Endothelial cell of umbilical vein (primary cell): ENCODE measurements at regions of chr19 and their contacts with region 1.

Region 1: GRCh38 chr19:46614114-46614722 is 10.7 kb downstream of the PTGIR start:
- DNase-seq: peak; percentile 73
- H3K4me3 ChIP-seq: no peak overlapping the region
- H3K27ac ChIP-seq: no peak overlapping the region
- H3K4me1 ChIP-seq: peaks cover 4% of the 10 kb centered on the region
- H3K27me3 ChIP-seq: no peaks in the 10 kb centered on the region
- CTCF ChIP-seq: peak; percentile 75 to 83
- POLR2A ChIP-seq: no peak

Region 2: DNA sequence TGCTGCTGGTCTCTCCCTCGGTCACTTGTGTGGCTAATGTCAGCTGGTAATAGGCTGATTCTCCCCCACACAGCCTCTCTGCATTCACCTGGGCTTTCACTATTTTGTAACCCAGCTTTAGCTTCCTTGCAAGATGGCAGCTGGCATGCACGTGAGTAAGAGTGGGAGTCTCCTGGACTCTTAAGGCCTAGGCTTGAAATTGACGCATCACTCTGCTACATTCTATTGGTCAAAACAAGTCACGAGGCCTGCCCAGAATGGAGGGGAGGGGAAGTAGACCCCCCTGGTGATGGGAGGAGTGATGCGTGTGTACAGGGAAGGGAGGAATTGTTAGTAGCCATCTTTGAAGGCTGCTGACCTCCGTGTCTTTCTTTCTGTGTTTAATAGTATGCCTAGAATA is 93.6 kb before region 1 on chr19:
- CTCF ChIA-PET with region 1: no interaction called
- POLR2A ChIA-PET with region 1: no interaction called
- dilution Hi-C with region 1: no loop called
- intact Hi-C with region 1: no loop called
- DNase-seq: no peak
- H3K4me3 ChIP-seq: no peak overlapping the region
- H3K27ac ChIP-seq: no peak overlapping the region
- H3K4me1 ChIP-seq: no peaks in the 10 kb centered on the region
- H3K27me3 ChIP-seq: no peaks in the 10 kb centered on the region
- CTCF ChIP-seq: no peak
- POLR2A ChIP-seq: no peak

Region 3: DNA sequence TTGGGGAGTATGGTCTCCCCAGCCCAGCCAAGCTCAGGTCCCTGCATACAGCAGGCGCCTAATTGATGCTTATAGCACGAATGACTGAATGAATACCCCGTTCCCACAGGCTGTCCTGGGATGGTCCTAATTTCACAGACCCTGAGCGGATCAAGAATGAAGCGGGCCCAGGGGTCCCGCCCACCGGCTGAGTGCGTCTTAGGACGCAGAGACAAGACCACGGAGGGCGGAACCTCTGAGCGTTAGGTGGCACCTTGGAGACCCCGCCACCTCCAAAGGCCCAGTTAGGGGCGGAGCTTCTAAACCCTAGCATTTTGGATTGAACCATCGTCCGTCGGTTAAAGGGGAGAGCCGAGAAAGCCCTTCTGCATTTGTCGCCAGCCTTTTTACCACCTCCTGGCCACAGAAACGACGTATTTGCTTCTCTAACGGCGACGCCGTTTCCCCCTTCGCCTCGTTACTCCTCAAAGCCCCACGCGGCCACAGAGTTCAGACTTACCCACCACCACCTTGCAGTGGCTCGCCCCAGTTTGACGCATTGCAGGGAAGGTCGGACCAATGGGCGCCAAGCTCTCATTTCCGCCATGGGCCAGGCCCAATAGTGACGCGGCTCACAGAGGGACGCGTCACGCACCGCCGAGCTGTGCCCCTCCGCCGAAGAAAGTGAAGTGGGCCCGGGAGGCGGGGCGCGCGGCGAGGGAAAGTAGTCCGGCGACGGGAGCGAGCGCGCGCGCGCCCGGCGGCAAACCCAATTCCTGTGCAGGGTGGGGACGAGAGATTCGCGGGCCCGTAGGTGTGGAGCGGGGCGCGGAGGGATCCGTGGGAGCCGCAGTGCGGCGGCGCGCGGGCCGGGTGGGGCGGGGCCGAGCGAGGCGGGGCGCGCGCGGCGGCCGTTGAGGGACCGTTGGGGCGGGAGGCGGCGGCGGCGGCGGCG is 13.6 kb before region 1 on chr19:
- CTCF ChIA-PET with region 1: interaction called, 17 read pairs
- POLR2A ChIA-PET with region 1: interaction called, 4 read pairs
- dilution Hi-C with region 1: no loop called
- intact Hi-C with region 1: loop called (anchors 1 kb)
- DNase-seq: peak; percentile 98
- H3K4me3 ChIP-seq: peak overlapping the region; percentile 2 to 99 (median 98)
- H3K27ac ChIP-seq: peak overlapping the region; percentile 93
- H3K4me1 ChIP-seq: peaks cover 13% of the 10 kb centered on the region
- H3K27me3 ChIP-seq: peaks cover 0 to 3% of the 10 kb centered on the region in 2 experiments
- CTCF ChIP-seq: no peak
- POLR2A ChIP-seq: peak; percentile 66

Region 4: GRCh38 chr19:46624958-46625661 is 10.9 kb after region 1 on chr19 and contains the start of gene PTGIR:
- CTCF ChIA-PET with region 1: interaction called, 29 read pairs
- POLR2A ChIA-PET with region 1: no interaction called
- dilution Hi-C with region 1: no loop called
- intact Hi-C with region 1: no loop called
- DNase-seq: peak; percentile 42
- H3K4me3 ChIP-seq: no peak within 1 kb of the TSS
- H3K27ac ChIP-seq: no peak within 1 kb of the TSS
- H3K4me1 ChIP-seq: peaks cover 12% of the 10 kb centered on the region
- H3K27me3 ChIP-seq: no peaks in the 10 kb centered on the region
- CTCF ChIP-seq: no peak
- POLR2A ChIP-seq: no peak
- total RNA-seq, gene PTGIR: 0.55 and 1.1 TPM in 2 replicates

Region 5: GRCh38 chr19:46634045-46634655 is 19.9 kb after region 1 on chr19:
- CTCF ChIA-PET with region 1: interaction called, 29 read pairs
- POLR2A ChIA-PET with region 1: no interaction called
- dilution Hi-C with region 1: no loop called
- intact Hi-C with region 1: no loop called
- DNase-seq: peak; percentile 75
- H3K4me3 ChIP-seq: peak overlapping the region in 1 of 3 experiments; percentile 32
- H3K27ac ChIP-seq: no peak overlapping the region
- H3K4me1 ChIP-seq: peaks cover 2% of the 10 kb centered on the region
- H3K27me3 ChIP-seq: peaks cover 0 to 12% of the 10 kb centered on the region in 2 experiments
- CTCF ChIP-seq: no peak
- POLR2A ChIP-seq: no peak

Region 6: DNA sequence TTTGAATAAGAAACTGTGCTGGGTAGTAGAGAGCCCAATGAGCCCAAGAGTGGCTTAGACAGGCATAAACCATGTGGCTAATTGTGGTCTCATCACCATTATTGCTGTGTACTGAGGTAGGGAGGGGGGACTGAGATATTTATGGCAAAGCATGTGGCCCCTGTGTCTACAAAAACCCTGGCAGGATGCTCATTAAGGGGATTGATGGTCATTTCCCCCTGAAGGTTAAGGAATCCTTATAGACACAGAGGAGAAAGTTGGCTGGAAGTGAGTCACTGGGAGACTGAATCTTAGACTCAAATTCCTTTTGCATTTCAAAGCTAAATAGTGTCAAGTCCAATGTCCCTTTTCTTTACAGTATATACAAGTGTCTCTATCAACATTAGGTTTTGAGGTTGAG is 56.6 kb after region 1 on chr19:
- CTCF ChIA-PET with region 1: interaction called, 422 read pairs
- POLR2A ChIA-PET with region 1: no interaction called
- dilution Hi-C with region 1: no loop called
- intact Hi-C with region 1: no loop called
- DNase-seq: peak; percentile 21
- H3K4me3 ChIP-seq: no peak overlapping the region
- H3K27ac ChIP-seq: peak overlapping the region; percentile 19
- H3K4me1 ChIP-seq: peaks cover 4% of the 10 kb centered on the region
- H3K27me3 ChIP-seq: no peaks in the 10 kb centered on the region
- CTCF ChIP-seq: no peak
- POLR2A ChIP-seq: no peak